ENCODE measurements at regions of chr11 and their contacts with region 1.

Region 1: GRCh38 chr11:101487775-101488174 is 96.0 kb downstream of the TRPC6 start:
- DNase-seq: peak; percentile 79
- ATAC-seq: peak; percentile 90
- H3K4me3 ChIP-seq: no peak overlapping the region
- H3K27ac ChIP-seq: peak overlapping the region; percentile 28; the same call in 1 of the 2 replicates
- H3K4me1 ChIP-seq: peaks cover 6% of the 10 kb centered on the region
- H3K27me3 ChIP-seq: no peaks in the 10 kb centered on the region
- CTCF ChIP-seq: no peak
- POLR2A ChIP-seq: no peak
- RAD21 ChIP-seq: no peak

Region 2: GRCh38 chr11:101553891-101554292 is 66.1 kb after region 1 on chr11:
- CTCF ChIA-PET with region 1: no interaction called
- POLR2A ChIA-PET with region 1: no interaction called
- dilution Hi-C with region 1: no loop called
- in situ Hi-C with region 1: no loop called
- intact Hi-C with region 1: loop called (anchors 5 kb)
- DNase-seq: peak; percentile 92
- ATAC-seq: peak; percentile 94
- H3K4me3 ChIP-seq: no peak overlapping the region
- H3K27ac ChIP-seq: no peak overlapping the region
- H3K4me1 ChIP-seq: peaks cover 16% of the 10 kb centered on the region
- H3K27me3 ChIP-seq: no peaks in the 10 kb centered on the region
- CTCF ChIP-seq: no peak
- POLR2A ChIP-seq: no peak
- RAD21 ChIP-seq: no peak

Region 3: DNA sequence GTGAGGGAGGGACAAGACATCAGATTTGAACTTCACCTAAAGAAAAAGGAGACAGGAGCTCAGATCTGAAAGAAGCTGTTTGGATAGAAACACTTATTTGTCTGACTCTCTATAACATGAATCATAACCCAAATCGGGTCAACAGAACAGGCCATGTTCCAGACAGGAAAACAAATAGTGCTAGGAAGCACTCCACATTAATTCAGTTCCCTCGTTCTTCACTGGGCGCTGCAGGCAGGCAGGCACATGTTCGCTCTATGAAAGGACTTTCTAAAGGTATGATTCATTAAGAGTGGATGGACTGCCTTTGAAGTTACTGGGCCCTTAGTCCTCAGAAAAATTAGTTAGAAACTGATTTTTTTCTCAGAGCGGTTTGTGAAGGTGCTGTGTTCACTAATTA is 233.5 kb after region 1 on chr11:
- CTCF ChIA-PET with region 1: no interaction called
- POLR2A ChIA-PET with region 1: no interaction called
- dilution Hi-C with region 1: no loop called
- in situ Hi-C with region 1: no loop called
- intact Hi-C with region 1: loop called (anchors 10 kb)
- DNase-seq: peak; percentile 1
- ATAC-seq: peak; percentile 21; the same call in 1 of the 2 replicates
- H3K4me3 ChIP-seq: no peak overlapping the region
- H3K27ac ChIP-seq: no peak overlapping the region
- H3K4me1 ChIP-seq: peaks cover 6% of the 10 kb centered on the region
- H3K27me3 ChIP-seq: no peaks in the 10 kb centered on the region
- CTCF ChIP-seq: no peak
- POLR2A ChIP-seq: no peak
- RAD21 ChIP-seq: no peak

Measured in IMR-90 (cell line).